Gastrocnemius medialis (tissue), 4 donors: ENCODE measurements at regions of chr2 and their contacts with region 1.

Region 1: GRCh38 chr2:63841254-63842022 is at the start of gene UGP2:
- DNase-seq: peak; percentile 91
- ATAC-seq: peak; percentile 52 to 54
- H3K4me3 ChIP-seq: peak within 1 kb of the TSS; percentile 75 to 95 (median 92)
- H3K27ac ChIP-seq: peak within 1 kb of the TSS; percentile 94 to 99 (median 98)
- H3K4me1 ChIP-seq: peaks cover 46 to 53% of the 10 kb centered on the region in 2 donors
- H3K27me3 ChIP-seq: no peaks in the 10 kb centered on the region
- CTCF ChIP-seq: peak in 1 of 5 experiments; percentile 12
- POLR2A ChIP-seq: peak; percentile 79 to 91
- total RNA-seq, gene UGP2: 398 to 784 (median 580) TPM

Region 2: DNA sequence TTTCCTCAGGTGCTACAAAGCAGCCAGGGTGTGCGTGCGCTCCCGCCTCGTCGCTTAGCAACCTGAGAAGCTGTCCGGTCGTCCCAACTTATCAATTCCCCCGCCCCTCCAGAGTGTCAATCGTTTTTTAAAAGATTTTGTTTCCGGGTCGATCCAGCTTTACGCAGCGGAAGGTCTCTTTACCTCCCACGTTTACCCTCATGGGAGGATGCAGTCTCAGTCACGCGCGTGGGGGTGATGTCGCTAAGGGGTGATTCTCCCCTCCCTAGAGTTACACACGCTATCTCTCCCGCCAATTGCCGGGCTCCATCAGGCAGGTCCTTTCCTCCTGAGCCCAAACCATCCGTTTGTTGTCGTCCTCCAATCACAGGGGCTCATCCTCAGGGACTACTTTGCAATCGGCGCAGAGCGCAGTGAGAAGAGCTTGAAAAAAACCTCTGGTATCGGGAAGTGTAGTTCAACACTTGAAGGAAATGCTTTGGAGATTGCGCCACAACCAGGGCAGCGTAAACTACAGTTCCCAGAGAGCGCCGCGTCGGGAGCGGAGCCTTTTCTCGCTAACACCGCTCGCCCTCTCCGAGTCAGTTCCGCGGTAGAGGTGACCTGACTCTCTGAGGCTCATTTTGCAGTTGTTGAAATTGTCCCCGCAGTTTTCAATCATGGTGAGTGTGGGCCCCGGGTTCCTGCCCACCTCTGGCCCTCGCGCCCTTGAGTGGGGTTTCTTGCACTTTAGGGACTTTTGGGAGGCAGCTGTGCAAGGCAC is 252.9 kb before region 1 on chr2 and contains the starts of genes MDH1 and WDPCP:
- in situ Hi-C with region 1: no loop called
- intact Hi-C with region 1: loop called (anchors 2 kb)
- DNase-seq: peak; percentile 93 to 96
- ATAC-seq: peak; percentile 88 to 95
- H3K4me3 ChIP-seq: peak within 1 kb of the TSS; percentile 63 to 93 (median 76)
- H3K27ac ChIP-seq: peak within 1 kb of the TSS; percentile 86 to 92 (median 90)
- H3K4me1 ChIP-seq: peaks cover 54% of the 10 kb centered on the region in 2 donors
- H3K27me3 ChIP-seq: no peaks in the 10 kb centered on the region
- CTCF ChIP-seq: no peak
- POLR2A ChIP-seq: peak; percentile 76 to 87
- total RNA-seq, gene MDH1: 133 to 241 (median 194) TPM
- total RNA-seq, gene WDPCP: 7.2 to 47.3 (median 13.0) TPM

Region 3: GRCh38 chr2:63712748-63713147 is 128.7 kb before region 1 on chr2:
- in situ Hi-C with region 1: no loop called
- intact Hi-C with region 1: loop called (anchors 5 kb)
- DNase-seq: peak; percentile 41 to 52
- ATAC-seq: peak; percentile 91 to 93
- H3K4me3 ChIP-seq: no peak overlapping the region
- H3K27ac ChIP-seq: peak overlapping the region; percentile 51 to 74 (median 64)
- H3K4me1 ChIP-seq: peaks cover 41 to 47% of the 10 kb centered on the region in 2 donors
- H3K27me3 ChIP-seq: no peaks in the 10 kb centered on the region
- CTCF ChIP-seq: no peak
- POLR2A ChIP-seq: no peak

Region 4: GRCh38 chr2:63820969-63821368 is 20.5 kb before region 1 on chr2:
- in situ Hi-C with region 1: no loop called
- intact Hi-C with region 1: loop called (anchors 1 kb)
- DNase-seq: no peak
- ATAC-seq: peak; percentile 34 to 38
- H3K4me3 ChIP-seq: no peak overlapping the region
- H3K27ac ChIP-seq: peak overlapping the region; percentile 29 to 75 (median 62)
- H3K4me1 ChIP-seq: peaks cover 31 to 35% of the 10 kb centered on the region in 2 donors
- H3K27me3 ChIP-seq: no peaks in the 10 kb centered on the region
- CTCF ChIP-seq: no peak
- POLR2A ChIP-seq: no peak

Region 5: GRCh38 chr2:64018923-64019718 is 177.7 kb after region 1 on chr2 and contains the start of gene VPS54:
- in situ Hi-C with region 1: no loop called
- intact Hi-C with region 1: loop called (anchors 5 kb)
- DNase-seq: peak; percentile 17 to 64
- ATAC-seq: peak; percentile 84 to 89
- H3K4me3 ChIP-seq: peak within 1 kb of the TSS; percentile 65 to 85 (median 80)
- H3K27ac ChIP-seq: peak within 1 kb of the TSS; percentile 88 to 96 (median 92)
- H3K4me1 ChIP-seq: peaks cover 34 to 39% of the 10 kb centered on the region in 2 donors
- H3K27me3 ChIP-seq: no peaks in the 10 kb centered on the region
- CTCF ChIP-seq: peak; percentile 15 to 34 (median 25)
- POLR2A ChIP-seq: peak; percentile 66
- total RNA-seq, gene VPS54: 7.9 to 12.4 (median 9.8) TPM

Region 6: GRCh38 chr2:64045938-64046337 is 204.5 kb after region 1 on chr2:
- in situ Hi-C with region 1: no loop called
- intact Hi-C with region 1: no loop called
- DNase-seq: no peak
- ATAC-seq: no peak
- H3K4me3 ChIP-seq: no peak overlapping the region
- H3K27ac ChIP-seq: no peak overlapping the region
- H3K4me1 ChIP-seq: no peaks in the 10 kb centered on the region
- H3K27me3 ChIP-seq: no peaks in the 10 kb centered on the region
- CTCF ChIP-seq: no peak
- POLR2A ChIP-seq: no peak

Region 7: GRCh38 chr2:65056215-65057053 is 1215.0 kb after region 1 on chr2 and contains the start of gene CEP68:
- in situ Hi-C with region 1: no loop called
- intact Hi-C with region 1: loop called (anchors 10 kb)
- DNase-seq: peak; percentile 98
- ATAC-seq: peak; percentile 93
- H3K4me3 ChIP-seq: peak within 1 kb of the TSS; percentile 70 to 90 (median 86)
- H3K27ac ChIP-seq: peak within 1 kb of the TSS; percentile 90 to 96 (median 92)
- H3K4me1 ChIP-seq: peaks cover 48 to 50% of the 10 kb centered on the region in 2 donors
- H3K27me3 ChIP-seq: no peaks in the 10 kb centered on the region
- CTCF ChIP-seq: peak in 3 of 5 experiments; percentile 9 to 26 (median 19)
- POLR2A ChIP-seq: peak; percentile 96 to 99
- total RNA-seq, gene CEP68: 21.4 to 48.0 (median 35.2) TPM